ENCODE measurements at regions of chr17 and their contacts with region 1.

Region 1: GRCh38 chr17:80101011-80101945 is at the start of gene GAA:
- DNase-seq: peak; percentile 89
- H3K4me3 Mint-ChIP-seq: peak within 1 kb of the TSS; percentile 90
- H3K27ac Mint-ChIP-seq: peak within 1 kb of the TSS; percentile 72
- H3K4me1 Mint-ChIP-seq: peaks cover 23% of the 10 kb centered on the region
- H3K27me3 Mint-ChIP-seq: no peaks in the 10 kb centered on the region
- total RNA-seq, gene GAA: 28.0 to 29.6 TPM

Region 2: DNA sequence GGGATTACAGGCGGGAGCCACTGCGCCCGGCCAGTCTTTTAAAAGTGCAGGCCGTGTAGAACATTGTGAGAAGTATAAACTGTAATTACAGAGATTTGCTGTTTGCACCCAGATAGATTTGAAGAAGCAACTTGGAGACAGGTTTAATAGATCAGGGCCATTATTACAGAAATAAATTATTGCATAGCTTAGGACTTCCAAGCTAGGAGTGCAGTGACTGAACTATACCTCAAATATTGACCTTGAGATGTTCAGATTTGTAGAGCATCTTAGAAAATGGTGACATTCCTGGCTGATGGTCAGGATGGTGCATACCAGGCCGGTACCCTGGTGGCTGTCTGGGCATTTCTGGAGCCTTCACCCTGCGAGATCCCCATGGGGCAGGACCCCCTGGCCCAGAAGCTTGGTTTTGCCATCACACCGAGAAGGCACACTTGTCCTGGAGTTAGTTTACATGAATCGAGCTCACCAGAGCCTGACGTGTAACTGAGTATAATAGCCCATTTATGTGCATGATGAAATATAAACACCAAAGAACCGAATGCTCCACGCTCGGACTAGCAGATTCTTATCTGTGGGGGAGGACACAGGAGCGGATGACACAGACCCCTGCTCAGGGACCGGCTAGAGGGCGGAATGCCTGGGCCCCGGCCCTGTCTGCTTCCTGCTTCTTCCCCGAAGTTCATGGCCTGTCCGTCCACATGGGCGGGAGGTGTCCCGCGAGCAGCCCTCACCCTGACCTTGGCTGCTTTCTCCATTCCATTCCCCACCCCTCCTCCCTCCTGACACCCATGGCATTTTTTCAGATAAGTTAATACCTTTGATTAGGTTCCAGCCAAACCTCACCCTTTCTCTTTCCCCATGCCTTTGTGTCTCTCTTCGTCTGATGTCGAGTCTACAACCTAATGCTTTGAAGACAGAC is 32.7 kb before region 1 on chr17:
- CTCF ChIA-PET with region 1: no interaction called
- POLR2A ChIA-PET with region 1: no interaction called
- intact Hi-C with region 1: no loop called
- DNase-seq: no peak
- H3K4me3 Mint-ChIP-seq: no peak overlapping the region
- H3K27ac Mint-ChIP-seq: no peak overlapping the region
- H3K4me1 Mint-ChIP-seq: no peaks in the 10 kb centered on the region
- H3K27me3 Mint-ChIP-seq: no peaks in the 10 kb centered on the region

Region 3: DNA sequence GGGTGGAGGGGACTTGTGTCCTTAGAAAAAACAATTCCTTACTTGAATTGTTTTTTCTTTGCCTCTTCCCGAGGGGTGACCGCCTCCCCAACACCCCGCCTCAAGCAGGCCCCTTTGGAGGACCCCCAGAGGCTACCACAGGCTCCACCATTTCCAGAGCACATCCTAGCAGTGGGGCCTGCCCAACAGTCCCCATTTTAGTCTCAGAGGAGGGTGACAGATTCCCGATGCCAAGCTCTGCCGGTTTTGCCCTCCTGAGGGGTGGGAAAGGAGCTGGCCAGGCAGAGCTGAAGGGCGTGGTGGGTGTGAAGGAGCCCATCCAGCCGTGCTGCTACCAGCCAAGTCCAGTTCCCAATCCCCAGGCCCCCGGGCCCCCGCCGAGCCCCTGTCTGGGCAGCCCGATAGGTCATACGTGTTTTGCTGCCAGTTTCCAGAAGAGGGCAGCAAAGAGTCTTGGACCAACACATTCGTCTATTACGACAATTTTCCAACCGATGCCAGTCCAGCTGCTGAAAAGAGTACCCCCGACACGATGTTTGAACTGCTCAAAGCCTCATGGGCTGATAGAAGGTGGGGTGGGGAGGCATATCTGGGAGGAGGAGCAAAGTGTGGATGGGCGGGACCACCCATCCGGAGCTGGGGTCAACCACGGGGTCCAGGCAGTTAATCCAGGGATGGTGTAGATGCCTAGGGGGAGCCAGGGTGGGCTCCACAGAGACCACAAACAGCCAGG is 18.7 kb before region 1 on chr17:
- CTCF ChIA-PET with region 1: interaction called, 18 read pairs
- POLR2A ChIA-PET with region 1: no interaction called
- intact Hi-C with region 1: loop called (anchors 2 kb)
- DNase-seq: peak; percentile 73
- H3K4me3 Mint-ChIP-seq: no peak overlapping the region
- H3K27ac Mint-ChIP-seq: no peak overlapping the region
- H3K4me1 Mint-ChIP-seq: no peaks in the 10 kb centered on the region
- H3K27me3 Mint-ChIP-seq: peaks cover 5% of the 10 kb centered on the region

Region 4: GRCh38 chr17:80117491-80118401 is 16.5 kb after region 1 on chr17:
- CTCF ChIA-PET with region 1: interaction called, 10 read pairs
- POLR2A ChIA-PET with region 1: no interaction called
- intact Hi-C with region 1: no loop called
- DNase-seq: no peak
- H3K4me3 Mint-ChIP-seq: no peak overlapping the region
- H3K27ac Mint-ChIP-seq: no peak overlapping the region
- H3K4me1 Mint-ChIP-seq: peaks cover 2% of the 10 kb centered on the region
- H3K27me3 Mint-ChIP-seq: no peaks in the 10 kb centered on the region

Region 5: GRCh38 chr17:80125716-80126715 is 24.7 kb after region 1 on chr17:
- CTCF ChIA-PET with region 1: interaction called, 17 read pairs
- POLR2A ChIA-PET with region 1: no interaction called
- intact Hi-C with region 1: no loop called
- DNase-seq: no peak
- H3K4me3 Mint-ChIP-seq: no peak overlapping the region
- H3K27ac Mint-ChIP-seq: no peak overlapping the region
- H3K4me1 Mint-ChIP-seq: no peaks in the 10 kb centered on the region
- H3K27me3 Mint-ChIP-seq: peaks cover 7% of the 10 kb centered on the region

Region 6: DNA sequence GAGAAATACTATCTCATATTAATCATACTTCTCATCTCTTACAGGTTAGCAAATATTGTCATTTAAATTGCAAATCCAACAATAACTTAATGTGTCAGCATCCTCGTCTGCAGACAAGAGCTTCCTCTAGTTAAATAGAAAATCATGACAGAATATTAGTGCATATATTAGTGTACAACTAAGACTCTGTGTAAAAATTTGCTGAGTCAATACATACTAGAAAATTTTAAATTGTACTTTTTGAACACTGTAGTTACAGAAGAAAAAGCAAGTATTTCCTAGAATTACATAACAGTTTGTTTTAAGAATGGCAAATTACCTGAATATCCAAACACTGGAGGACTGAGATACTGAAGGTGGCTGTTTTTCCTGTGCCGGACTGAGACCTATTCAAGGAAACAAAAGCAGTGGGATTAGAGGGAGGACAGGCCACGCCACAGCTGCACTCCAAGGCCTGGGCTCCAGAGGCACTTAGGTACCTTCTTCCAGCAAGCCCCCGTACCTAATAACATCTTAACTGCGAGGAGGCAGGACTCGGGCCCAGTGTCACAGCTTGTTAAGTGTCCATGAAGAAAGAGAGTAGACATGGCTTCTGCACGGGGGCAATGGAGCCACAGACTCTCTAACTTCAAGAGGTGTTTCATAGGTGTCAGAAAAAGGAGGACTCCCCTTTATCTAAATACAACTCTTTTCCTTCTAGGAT is 40.3 kb after region 1 on chr17:
- CTCF ChIA-PET with region 1: interaction called, 23 read pairs
- POLR2A ChIA-PET with region 1: interaction called, 8 read pairs
- intact Hi-C with region 1: loop called (anchors 2 kb)
- DNase-seq: no peak
- H3K4me3 Mint-ChIP-seq: no peak overlapping the region
- H3K27ac Mint-ChIP-seq: no peak overlapping the region
- H3K4me1 Mint-ChIP-seq: peaks cover 20% of the 10 kb centered on the region
- H3K27me3 Mint-ChIP-seq: no peaks in the 10 kb centered on the region

Region 7: DNA sequence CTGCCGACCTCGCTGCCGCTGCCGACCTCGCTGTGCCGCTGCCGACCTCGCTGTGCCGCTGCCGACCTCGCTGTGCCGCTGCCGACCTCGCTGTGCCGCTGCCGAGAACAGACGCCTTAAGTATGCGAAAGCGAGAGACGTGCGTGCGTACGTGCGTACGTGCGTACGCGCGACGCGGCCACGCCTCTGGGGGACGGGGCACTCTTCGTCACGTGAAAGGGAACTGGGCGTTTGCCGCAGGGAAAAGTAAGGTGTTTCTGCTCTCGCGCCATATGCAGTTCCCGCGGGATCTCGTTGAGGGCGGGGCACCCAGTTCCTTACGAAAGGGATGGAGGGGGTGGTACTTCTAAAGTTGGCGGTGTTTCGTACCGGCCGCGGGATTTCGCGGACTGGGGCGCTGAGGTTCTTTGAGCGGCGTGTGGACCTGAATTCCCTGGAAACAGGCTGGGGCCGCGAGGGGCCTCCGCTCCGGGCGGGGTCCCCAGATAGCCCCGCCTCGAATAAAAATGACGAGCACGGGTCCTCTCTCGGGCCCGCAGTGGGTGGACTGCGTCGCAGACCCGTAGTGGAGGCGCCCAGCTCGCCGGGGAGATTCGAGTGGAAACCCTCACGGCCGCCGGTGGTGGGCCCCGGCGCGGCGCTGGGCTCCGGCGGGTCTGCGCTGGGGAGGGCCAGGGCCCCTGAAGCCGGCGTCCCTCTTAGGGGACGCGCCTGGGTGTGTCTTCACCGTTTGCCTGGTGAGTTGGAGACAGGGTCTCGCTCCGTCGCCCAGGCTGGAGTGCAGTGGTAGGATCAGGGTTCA is 46.0 kb after region 1 on chr17 and contains the start of gene EIF4A3:
- CTCF ChIA-PET with region 1: interaction called, 23 read pairs
- POLR2A ChIA-PET with region 1: interaction called, 8 read pairs
- intact Hi-C with region 1: loop called (anchors 2 kb)
- DNase-seq: peak; percentile 99
- H3K4me3 Mint-ChIP-seq: peak within 1 kb of the TSS; percentile 94
- H3K27ac Mint-ChIP-seq: peak within 1 kb of the TSS; percentile 93
- H3K4me1 Mint-ChIP-seq: peaks cover 36% of the 10 kb centered on the region
- H3K27me3 Mint-ChIP-seq: no peaks in the 10 kb centered on the region
- total RNA-seq, gene EIF4A3: 111 to 115 TPM

Region 8: GRCh38 chr17:80254396-80255251 is 153.3 kb after region 1 on chr17:
- CTCF ChIA-PET with region 1: interaction called, 7 read pairs
- POLR2A ChIA-PET with region 1: interaction called, 3 read pairs
- intact Hi-C with region 1: loop called (anchors 2 kb)
- DNase-seq: peak; percentile 86
- H3K4me3 Mint-ChIP-seq: peak overlapping the region; percentile 41
- H3K27ac Mint-ChIP-seq: peak overlapping the region; percentile 92
- H3K4me1 Mint-ChIP-seq: peaks cover 71% of the 10 kb centered on the region
- H3K27me3 Mint-ChIP-seq: no peaks in the 10 kb centered on the region

Measured in activated CD4-positive, alpha-beta memory T cell treated with anti-CD3 and anti-CD28 coated beads for 36 hours (primary cell).